ENCODE measurements at regions of chr17 and their contacts with region 1.

Region 1: GRCh38 chr17:38853292-38854219 is at the start of gene RPL23:
- DNase-seq: peak; percentile 98
- H3K4me3 ChIP-seq: peak within 1 kb of the TSS; percentile 82 to 93 (median 91)
- H3K27ac ChIP-seq: peak within 1 kb of the TSS; percentile 84
- H3K4me1 ChIP-seq: peaks cover 19% of the 10 kb centered on the region
- H3K27me3 ChIP-seq: no peaks in the 10 kb centered on the region
- CTCF ChIP-seq: no peak
- POLR2A ChIP-seq: peak; percentile 97
- total RNA-seq, gene RPL23: 1,270 and 1,292 TPM in 2 replicates

Region 2: DNA sequence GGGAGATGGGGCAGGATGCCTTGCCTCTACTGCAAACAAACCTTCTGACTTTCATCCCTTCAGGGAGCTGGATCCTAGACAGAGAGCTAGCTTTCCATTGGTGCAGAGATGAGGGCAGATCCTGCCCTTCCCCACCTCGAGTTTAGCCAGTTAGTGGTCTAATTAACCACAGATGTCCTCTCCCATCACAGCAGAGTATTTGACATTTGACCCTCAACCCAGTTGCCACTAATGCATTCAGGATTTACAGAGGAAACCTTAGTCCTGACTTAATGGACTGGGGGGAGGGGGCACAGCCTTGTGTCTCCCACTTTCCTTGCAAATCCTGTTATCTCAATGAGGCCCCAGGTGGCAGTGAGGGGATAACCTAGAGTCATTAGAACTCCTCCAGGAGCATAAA is 64.4 kb before region 1 on chr17:
- CTCF ChIA-PET with region 1: no interaction called
- POLR2A ChIA-PET with region 1: no interaction called
- dilution Hi-C with region 1: no loop called
- intact Hi-C with region 1: loop called (anchors 1 kb)
- DNase-seq: no peak
- H3K4me3 ChIP-seq: no peak overlapping the region
- H3K27ac ChIP-seq: no peak overlapping the region
- H3K4me1 ChIP-seq: peaks cover 22% of the 10 kb centered on the region
- H3K27me3 ChIP-seq: no peaks in the 10 kb centered on the region
- CTCF ChIP-seq: no peak
- POLR2A ChIP-seq: no peak

Region 3: GRCh38 chr17:38799378-38800236 is 53.9 kb before region 1 on chr17 and contains the start of gene PIP4K2B:
- CTCF ChIA-PET with region 1: no interaction called
- POLR2A ChIA-PET with region 1: no interaction called
- dilution Hi-C with region 1: no loop called
- intact Hi-C with region 1: loop called (anchors 5 kb)
- DNase-seq: peak; percentile 96
- H3K4me3 ChIP-seq: peak within 1 kb of the TSS; percentile 51 to 94 (median 70)
- H3K27ac ChIP-seq: peak within 1 kb of the TSS; percentile 94
- H3K4me1 ChIP-seq: peaks cover 17% of the 10 kb centered on the region
- H3K27me3 ChIP-seq: no peaks in the 10 kb centered on the region
- CTCF ChIP-seq: no peak
- POLR2A ChIP-seq: peak; percentile 50
- total RNA-seq, gene PIP4K2B: 48.1 and 48.8 TPM in 2 replicates

Region 4: GRCh38 chr17:38824899-38825761 is 28.4 kb before region 1 on chr17 and contains the start of gene CWC25:
- CTCF ChIA-PET with region 1: interaction called, 7 read pairs
- POLR2A ChIA-PET with region 1: interaction called, 6 read pairs
- dilution Hi-C with region 1: no loop called
- intact Hi-C with region 1: loop called (anchors 1 kb)
- DNase-seq: peak; percentile 99
- H3K4me3 ChIP-seq: peak within 1 kb of the TSS; percentile 64 to 79 (median 77)
- H3K27ac ChIP-seq: peak within 1 kb of the TSS; percentile 96
- H3K4me1 ChIP-seq: peaks cover 10% of the 10 kb centered on the region
- H3K27me3 ChIP-seq: no peaks in the 10 kb centered on the region
- CTCF ChIP-seq: no peak
- POLR2A ChIP-seq: peak; percentile 87
- total RNA-seq, gene CWC25: 19.7 and 20.0 TPM in 2 replicates